ENCODE measurements at regions of chr11 and their contacts with region 1.

Region 1: GRCh38 chr11:65988791-65989592 is 13.0 kb downstream of the EIF1AD start:
- H3K4me3 Mint-ChIP-seq: no peak overlapping the region
- H3K27ac Mint-ChIP-seq: peak overlapping the region; percentile 53
- H3K4me1 Mint-ChIP-seq: peaks cover 12% of the 10 kb centered on the region
- H3K27me3 Mint-ChIP-seq: no peaks in the 10 kb centered on the region

Region 2: DNA sequence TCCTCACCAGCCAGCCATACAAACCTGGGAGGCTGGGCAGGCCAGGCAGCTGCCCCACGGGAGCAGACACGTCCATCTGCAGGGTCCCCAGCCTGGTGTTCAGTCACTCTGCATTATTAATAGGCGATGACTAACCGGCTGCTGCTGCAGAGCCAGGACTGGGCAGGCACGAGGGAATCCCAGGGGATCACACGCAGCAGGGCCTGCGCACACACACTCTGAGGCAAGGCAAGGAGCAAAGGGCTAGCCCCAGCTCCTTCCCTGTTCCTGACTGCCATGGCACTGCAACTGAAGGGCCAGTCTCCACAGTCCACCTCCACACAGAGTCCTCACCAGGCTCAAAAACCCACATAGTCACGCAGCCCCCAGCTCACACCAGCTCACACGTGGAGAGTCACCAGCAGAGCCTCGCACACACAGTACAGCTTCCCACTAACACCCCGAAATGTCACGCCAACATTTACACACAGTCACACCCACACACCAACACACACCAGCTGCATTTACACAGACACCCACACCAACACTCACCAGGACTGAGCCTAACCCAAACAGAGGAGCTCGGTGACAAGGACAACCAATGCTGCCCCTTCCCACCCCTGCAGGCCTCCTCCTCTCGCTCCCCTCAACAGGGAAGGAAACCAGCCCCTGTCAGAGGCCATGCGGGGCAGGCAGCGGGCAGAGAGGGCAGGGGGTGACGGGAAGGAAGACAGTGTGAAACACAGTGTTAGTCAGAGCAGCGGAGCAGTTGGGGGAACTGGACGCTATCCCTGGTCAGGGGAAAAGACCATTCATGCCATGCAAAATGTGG is 1313.3 kb before region 1 on chr11:
- intact Hi-C with region 1: no loop called
- H3K4me3 Mint-ChIP-seq: no peak overlapping the region
- H3K27ac Mint-ChIP-seq: no peak overlapping the region
- H3K4me1 Mint-ChIP-seq: peaks cover 60% of the 10 kb centered on the region
- H3K27me3 Mint-ChIP-seq: peaks cover 27% of the 10 kb centered on the region

Region 3: DNA sequence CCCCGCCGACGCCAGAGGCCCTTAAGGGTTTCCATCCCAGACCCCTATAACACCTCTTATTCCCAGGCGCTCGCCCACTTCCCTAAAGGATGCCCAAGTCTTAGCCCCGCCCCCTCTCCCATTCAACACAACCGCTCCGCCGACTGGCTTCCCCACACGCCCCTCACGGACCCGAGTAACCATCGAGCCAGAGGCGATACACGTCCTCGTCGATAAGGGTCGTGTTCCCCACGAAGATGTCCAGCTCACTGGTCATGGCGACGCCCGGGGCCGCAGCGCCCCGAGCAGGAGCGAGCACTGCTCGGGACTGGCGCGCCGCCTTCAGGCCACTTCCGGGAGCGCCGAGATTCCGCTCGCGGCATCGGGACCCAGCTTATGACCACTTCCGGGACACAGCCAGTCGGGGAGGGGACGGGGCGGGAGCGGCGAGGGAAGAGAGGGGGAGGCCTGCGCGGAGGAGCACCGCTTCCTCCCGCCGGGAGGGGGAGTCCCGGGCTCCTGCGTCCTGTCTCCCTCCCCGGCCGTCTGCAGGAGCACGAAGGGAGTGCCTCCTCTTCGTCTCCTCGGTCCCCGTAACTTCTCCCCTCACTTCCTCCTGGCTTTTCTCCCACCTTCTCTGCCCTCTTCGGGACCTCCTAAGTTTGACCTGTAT is 100.7 kb before region 1 on chr11 and contains the start of gene FIBP:
- intact Hi-C with region 1: loop called (anchors 1 kb)
- H3K4me3 Mint-ChIP-seq: peak within 1 kb of the TSS; percentile 98
- H3K27ac Mint-ChIP-seq: peak within 1 kb of the TSS; percentile 99
- H3K4me1 Mint-ChIP-seq: peaks cover 77% of the 10 kb centered on the region
- H3K27me3 Mint-ChIP-seq: no peaks in the 10 kb centered on the region

Region 4: DNA sequence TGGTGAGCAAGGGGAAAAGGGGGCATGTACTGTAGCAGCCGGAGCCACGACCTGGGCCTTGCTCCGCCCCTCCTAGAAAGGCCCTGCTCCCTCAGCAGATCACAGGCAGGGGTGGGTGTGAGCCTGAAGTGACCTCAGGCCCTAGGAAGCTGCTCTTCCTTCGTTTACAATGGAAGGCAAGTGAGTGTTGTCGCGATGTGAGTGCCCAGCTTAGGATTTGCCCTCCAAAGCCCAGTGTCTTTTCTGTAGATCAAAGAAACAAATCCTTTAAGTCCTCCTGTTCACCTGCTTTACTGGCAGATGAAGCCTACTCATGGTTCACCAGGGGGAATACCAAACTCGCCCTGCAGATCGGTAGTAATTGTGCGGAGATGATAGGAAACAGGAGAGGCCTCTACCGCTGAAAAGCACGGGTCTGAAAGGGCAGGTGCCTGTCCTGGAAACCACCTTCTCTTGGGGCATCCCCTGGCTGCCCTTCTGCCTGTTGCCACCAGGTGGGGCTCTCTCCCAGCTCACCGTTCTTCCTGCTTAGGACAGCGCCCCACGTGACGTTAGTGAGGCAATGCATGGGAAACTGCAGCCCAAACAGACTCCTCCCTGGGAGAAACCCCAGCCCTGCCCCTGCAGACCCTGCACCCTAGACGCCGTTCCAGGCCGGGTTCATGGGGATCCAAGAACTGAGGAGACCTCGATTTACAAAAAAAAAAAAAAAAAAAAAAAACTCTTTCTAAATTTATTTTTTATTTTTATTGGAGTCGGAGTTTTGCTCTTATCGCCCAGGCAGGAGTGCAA is 233.6 kb after region 1 on chr11:
- intact Hi-C with region 1: no loop called
- H3K4me3 Mint-ChIP-seq: no peak overlapping the region
- H3K27ac Mint-ChIP-seq: no peak overlapping the region
- H3K4me1 Mint-ChIP-seq: no peaks in the 10 kb centered on the region
- H3K27me3 Mint-ChIP-seq: no peaks in the 10 kb centered on the region

Measured in dendritic cell treated with granulocyte-macrophage colony-stimulating factor and Interleukin-4, amounts not matched to agents 40 ng/mL and 50 ng/mL, for 4 days (primary cell).